ENCODE measurements at regions of chr1 and their contacts with region 1.

Region 1: DNA sequence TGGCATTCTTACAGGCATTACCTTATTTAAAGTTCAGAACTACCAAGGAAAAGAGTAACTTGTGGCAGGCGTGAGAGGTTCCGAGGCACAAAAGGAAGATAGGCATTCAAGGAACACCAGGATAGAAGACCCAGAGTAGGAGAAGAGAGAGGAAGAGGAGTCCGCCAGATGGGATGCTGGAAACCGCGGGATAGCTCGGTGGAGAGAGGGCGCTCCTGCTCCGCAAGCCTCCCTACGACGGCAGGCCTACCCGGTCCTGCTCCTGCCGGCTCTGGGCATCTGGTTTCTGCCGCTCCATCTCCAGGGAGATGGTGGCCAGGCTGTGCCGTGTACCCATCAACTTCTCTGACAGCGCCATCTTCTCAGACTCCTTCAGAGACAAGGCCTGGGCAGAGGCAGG is 5.4 kb upstream of the NBPF1 start:
- DNase-seq: peak; percentile 44
- ATAC-seq: no peak
- H3K4me3 ChIP-seq: no peak overlapping the region
- H3K4me3 Mint-ChIP-seq: no peak overlapping the region
- H3K27ac ChIP-seq: no peak overlapping the region
- H3K27ac Mint-ChIP-seq: no peak overlapping the region
- H3K4me1 ChIP-seq: peaks cover 7 to 8% of the 10 kb centered on the region in 2 donors
- H3K4me1 Mint-ChIP-seq: no peaks in the 10 kb centered on the region
- H3K27me3 ChIP-seq: peaks cover 0 to 8% (median 1%) of the 10 kb centered on the region in 4 experiments
- H3K27me3 Mint-ChIP-seq: no peaks in the 10 kb centered on the region
- CTCF ChIP-seq: no peak

Region 2: DNA sequence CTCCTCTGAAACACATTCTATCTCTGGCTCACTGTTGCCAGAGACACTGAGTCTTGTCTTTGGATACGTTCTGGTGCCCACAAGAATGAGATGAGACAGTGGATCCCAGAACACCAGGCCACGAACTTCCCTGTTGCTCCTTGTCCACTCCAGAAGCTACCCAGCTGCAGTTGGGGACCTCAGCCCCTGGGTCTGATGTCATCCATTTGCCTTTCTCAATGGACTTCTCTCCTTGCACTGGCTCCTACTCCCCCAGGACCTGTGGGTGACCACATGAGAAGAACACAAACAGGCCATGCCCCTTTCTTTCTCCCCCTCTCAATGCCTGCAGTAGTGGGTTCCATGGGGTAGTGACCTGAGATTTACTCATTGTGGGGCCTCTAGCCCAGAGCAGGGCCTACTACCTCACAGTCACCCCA is 11.3 kb before region 1 on chr1:
- CTCF ChIA-PET with region 1: interaction called, 23 read pairs
- POLR2A ChIA-PET with region 1: no interaction called
- intact Hi-C with region 1: loop called (anchors 1 kb)
- DNase-seq: no peak
- ATAC-seq: no peak
- H3K4me3 ChIP-seq: no peak overlapping the region
- H3K4me3 Mint-ChIP-seq: no peak overlapping the region
- H3K27ac ChIP-seq: no peak overlapping the region
- H3K27ac Mint-ChIP-seq: no peak overlapping the region
- H3K4me1 ChIP-seq: peaks cover 6 to 7% of the 10 kb centered on the region in 2 donors
- H3K4me1 Mint-ChIP-seq: no peaks in the 10 kb centered on the region
- H3K27me3 ChIP-seq: peaks cover 0 to 4% (median 0%) of the 10 kb centered on the region in 4 experiments
- H3K27me3 Mint-ChIP-seq: no peaks in the 10 kb centered on the region
- CTCF ChIP-seq: no peak

Region 3: GRCh38 chr1:16960560-16961296 is 342.0 kb after region 1 on chr1:
- CTCF ChIA-PET with region 1: interaction called, 16 read pairs
- POLR2A ChIA-PET with region 1: no interaction called
- intact Hi-C with region 1: no loop called
- DNase-seq: peak; percentile 79
- ATAC-seq: peak; percentile 92
- H3K4me3 ChIP-seq: peak overlapping the region in 4 of 5 experiments; percentile 37 to 55 (median 50)
- H3K4me3 Mint-ChIP-seq: peak overlapping the region; percentile 91
- H3K27ac ChIP-seq: peak overlapping the region in 1 of 2 donors; percentile 26
- H3K27ac Mint-ChIP-seq: peak overlapping the region; percentile 76
- H3K4me1 ChIP-seq: peaks cover 4 to 10% of the 10 kb centered on the region in 2 donors
- H3K4me1 Mint-ChIP-seq: peaks cover 9% of the 10 kb centered on the region
- H3K27me3 ChIP-seq: no peaks in the 10 kb centered on the region
- H3K27me3 Mint-ChIP-seq: no peaks in the 10 kb centered on the region
- CTCF ChIP-seq: peak; percentile 75

Region 4: DNA sequence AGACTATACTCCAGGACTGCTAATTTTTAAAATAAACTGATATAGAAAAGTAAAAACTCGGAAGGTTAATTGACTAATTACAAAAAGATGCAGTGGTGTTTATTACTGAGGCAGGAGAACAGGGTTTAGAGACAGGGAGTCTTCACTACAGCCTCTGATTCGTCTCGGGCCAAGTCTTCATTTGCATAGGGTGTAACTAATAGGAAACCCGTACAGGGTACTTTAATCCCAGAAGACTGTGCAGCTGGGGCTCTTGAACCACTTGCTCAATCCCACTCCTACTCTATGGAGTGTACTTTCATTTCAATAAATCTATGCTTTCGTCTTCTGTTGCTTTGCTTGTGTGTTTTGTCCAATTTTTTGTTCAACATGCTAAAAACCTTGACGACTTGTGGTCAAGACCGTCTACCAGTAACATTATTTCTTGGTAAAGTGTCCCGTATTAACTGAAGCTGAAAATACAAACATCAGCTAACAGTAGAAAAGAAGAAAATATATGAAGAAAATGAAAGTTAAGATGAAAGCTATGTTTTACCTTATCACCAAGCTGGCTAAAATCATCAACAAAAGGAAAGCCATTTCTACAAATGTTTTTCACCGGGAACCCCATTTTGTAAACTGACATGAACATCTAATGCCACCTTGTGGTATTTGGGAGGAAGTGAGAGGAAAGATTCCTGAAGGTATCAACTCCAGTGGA is 427.1 kb after region 1 on chr1:
- CTCF ChIA-PET with region 1: interaction called, 25 read pairs
- POLR2A ChIA-PET with region 1: no interaction called
- intact Hi-C with region 1: no loop called
- DNase-seq: peak; percentile 53
- ATAC-seq: peak; percentile 75
- H3K4me3 ChIP-seq: peak overlapping the region in 4 of 5 experiments; percentile 5 to 36 (median 30)
- H3K4me3 Mint-ChIP-seq: peak overlapping the region; percentile 83
- H3K27ac ChIP-seq: peak overlapping the region; percentile 26 to 56
- H3K27ac Mint-ChIP-seq: peak overlapping the region; percentile 84
- H3K4me1 ChIP-seq: peaks cover 6 to 11% of the 10 kb centered on the region in 2 donors
- H3K4me1 Mint-ChIP-seq: peaks cover 19% of the 10 kb centered on the region
- H3K27me3 ChIP-seq: no peaks in the 10 kb centered on the region
- H3K27me3 Mint-ChIP-seq: no peaks in the 10 kb centered on the region
- CTCF ChIP-seq: peak; percentile 76